PC-3 (cell line): ENCODE measurements at regions of chr3 and their contacts with region 1.

Region 1: GRCh38 chr3:31166249-31166885 is 271.9 kb upstream of the GADL1 start:
- DNase-seq: peak; percentile 92
- ATAC-seq: peak; percentile 90
- H3K4me3 ChIP-seq: peak overlapping the region; percentile 19; the same call in 1 of the 2 replicates
- H3K27ac ChIP-seq: peak overlapping the region; percentile 52
- H3K4me1 ChIP-seq: peaks cover 28% of the 10 kb centered on the region
- H3K27me3 ChIP-seq: no peaks in the 10 kb centered on the region
- CTCF ChIP-seq: no peak

Region 2: DNA sequence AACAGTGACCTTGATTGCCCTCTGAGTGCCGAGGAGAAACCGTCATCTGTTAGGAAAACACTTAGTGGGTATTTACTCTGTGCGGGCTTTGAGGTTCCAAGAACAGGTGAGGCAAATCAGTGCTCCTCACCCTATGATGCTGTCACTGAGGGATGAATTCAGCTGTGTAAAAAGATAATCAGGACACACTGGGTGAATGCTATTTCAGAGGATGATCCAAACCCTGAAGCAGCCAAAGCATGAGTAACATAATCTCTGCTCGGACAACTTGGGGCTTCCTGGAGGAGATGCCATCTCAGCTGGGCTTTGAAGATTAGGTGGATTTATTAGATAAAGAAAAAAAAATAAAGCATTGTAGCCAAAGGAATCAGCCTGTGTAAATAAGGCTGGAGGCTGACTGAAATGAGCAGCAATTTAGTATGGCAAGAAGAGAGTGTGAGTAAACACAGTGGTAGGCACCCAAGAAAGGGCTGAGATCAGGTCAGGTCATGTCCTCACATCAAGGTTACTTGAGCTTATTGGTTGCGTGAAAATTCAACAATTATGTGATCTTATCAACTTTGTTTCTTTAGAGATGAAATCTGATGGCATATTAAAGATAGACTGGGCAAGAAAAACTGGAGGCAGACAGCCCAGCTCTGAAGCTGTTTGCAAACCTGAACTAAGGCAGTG is 261.2 kb before region 1 on chr3:
- CTCF ChIA-PET with region 1: no interaction called
- POLR2A ChIA-PET with region 1: no interaction called
- intact Hi-C with region 1: no loop called
- DNase-seq: no peak
- ATAC-seq: no peak
- H3K4me3 ChIP-seq: no peak overlapping the region
- H3K27ac ChIP-seq: no peak overlapping the region
- H3K4me1 ChIP-seq: no peaks in the 10 kb centered on the region
- H3K27me3 ChIP-seq: no peaks in the 10 kb centered on the region
- CTCF ChIP-seq: no peak

Region 3: DNA sequence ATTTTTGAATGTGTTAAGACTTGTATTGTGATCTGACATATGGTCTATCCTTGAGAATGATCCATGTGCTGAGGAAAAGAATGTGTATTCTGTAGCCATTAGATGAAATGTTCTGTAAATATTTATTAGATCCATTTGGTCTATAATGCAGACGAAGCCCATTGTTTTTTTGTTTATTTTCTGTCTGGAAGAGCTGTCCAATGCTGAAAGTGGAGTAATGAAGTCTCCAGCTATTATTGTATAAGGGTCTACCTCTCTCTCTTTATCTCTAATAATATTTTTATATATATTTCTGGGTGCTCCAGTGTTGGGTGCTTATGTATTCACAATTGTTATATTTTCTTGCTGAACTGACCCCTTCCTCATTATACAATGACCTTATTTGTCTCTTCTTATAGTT is 21.3 kb before region 1 on chr3:
- CTCF ChIA-PET with region 1: no interaction called
- POLR2A ChIA-PET with region 1: no interaction called
- intact Hi-C with region 1: no loop called
- DNase-seq: no peak
- ATAC-seq: no peak
- H3K4me3 ChIP-seq: no peak overlapping the region
- H3K27ac ChIP-seq: no peak overlapping the region
- H3K4me1 ChIP-seq: peaks cover 14% of the 10 kb centered on the region
- H3K27me3 ChIP-seq: no peaks in the 10 kb centered on the region
- CTCF ChIP-seq: no peak

Region 4: DNA sequence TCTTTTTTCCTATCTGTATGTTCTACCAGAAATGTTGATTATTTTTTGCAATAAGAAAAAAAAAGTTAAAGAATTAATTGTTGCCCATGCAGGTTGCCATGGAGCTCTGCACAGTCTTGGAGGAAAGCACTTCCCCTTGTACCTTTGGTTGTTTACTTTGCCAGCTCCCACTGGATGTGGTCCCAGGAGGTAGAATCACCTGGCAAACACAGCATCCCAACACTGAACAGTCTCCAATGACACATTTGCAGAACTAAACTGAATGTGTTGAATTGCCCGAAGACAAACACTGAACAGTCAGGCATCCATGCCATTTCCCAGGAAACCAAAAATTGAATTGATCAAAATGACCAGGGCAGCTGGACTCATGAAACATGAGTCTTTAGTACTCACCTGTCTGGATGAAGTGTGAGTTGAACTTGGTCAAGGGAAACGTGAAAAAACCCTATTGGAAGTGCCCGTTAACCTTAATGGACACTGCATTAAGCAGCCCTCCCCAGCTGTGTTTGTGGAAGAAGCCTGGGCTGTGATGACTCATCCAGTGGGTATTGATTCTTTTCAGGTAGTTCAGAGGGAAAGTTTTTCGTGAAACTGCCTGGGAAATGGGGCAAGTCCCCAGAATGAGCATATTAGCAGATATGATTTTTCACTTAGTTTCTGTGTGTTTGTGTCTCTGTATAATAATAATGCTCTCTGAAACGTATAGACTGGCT is 81.6 kb after region 1 on chr3:
- CTCF ChIA-PET with region 1: no interaction called
- POLR2A ChIA-PET with region 1: no interaction called
- intact Hi-C with region 1: no loop called
- DNase-seq: peak; percentile 82
- ATAC-seq: peak; percentile 85
- H3K4me3 ChIP-seq: no peak overlapping the region
- H3K27ac ChIP-seq: peak overlapping the region; percentile 51
- H3K4me1 ChIP-seq: peaks cover 29% of the 10 kb centered on the region
- H3K27me3 ChIP-seq: no peaks in the 10 kb centered on the region
- CTCF ChIP-seq: no peak

Region 5: GRCh38 chr3:31288641-31289100 is 122.3 kb after region 1 on chr3:
- CTCF ChIA-PET with region 1: no interaction called
- POLR2A ChIA-PET with region 1: no interaction called
- intact Hi-C with region 1: loop called (anchors 2 kb)
- DNase-seq: peak; percentile 96
- ATAC-seq: peak; percentile 91
- H3K4me3 ChIP-seq: no peak overlapping the region
- H3K27ac ChIP-seq: peak overlapping the region; percentile 71
- H3K4me1 ChIP-seq: peaks cover 57% of the 10 kb centered on the region
- H3K27me3 ChIP-seq: no peaks in the 10 kb centered on the region
- CTCF ChIP-seq: no peak

Region 6: DNA sequence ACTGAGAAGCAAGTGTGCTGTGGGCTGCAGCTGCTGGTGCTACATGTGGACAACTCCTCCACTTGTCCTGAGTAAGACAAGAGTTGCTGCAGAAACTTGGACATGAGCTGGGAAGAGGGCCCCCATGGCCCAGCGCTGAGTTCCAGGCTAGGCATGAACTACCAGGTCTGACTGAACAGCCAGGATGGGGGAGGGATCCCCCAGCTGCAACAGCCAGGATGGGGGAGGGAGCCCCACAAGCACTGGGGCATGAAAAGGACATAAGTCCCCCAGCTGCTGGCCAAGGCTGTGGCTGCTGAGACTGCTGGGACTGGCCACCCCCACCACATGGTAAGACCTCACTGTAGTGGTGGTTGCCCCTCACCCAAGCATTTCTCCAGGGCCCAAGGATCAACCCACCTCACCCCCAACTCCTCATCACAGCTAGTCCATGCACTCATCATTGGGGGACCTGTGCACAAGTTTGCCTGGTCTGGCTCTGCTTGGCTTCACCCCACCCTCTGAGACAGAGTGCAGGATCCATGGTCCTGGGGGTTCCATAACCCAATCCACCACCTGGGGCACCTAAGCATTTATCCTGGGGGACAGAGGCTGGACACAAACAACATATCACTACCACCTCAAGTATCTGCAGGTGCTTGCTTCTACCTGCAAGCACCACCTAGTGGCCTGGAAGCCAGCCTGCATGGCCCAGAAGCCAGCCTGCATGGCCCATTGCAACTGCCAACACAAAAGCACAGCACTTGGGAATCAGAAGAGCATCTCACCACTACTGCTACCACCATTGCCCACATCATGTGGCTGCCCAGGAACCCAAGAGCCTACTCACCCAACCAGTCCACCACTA is 281.9 kb after region 1 on chr3:
- CTCF ChIA-PET with region 1: no interaction called
- POLR2A ChIA-PET with region 1: no interaction called
- intact Hi-C with region 1: loop called (anchors 10 kb)
- DNase-seq: peak; percentile 59
- ATAC-seq: peak; percentile 97
- H3K4me3 ChIP-seq: no peak overlapping the region
- H3K27ac ChIP-seq: no peak overlapping the region
- H3K4me1 ChIP-seq: peaks cover 27% of the 10 kb centered on the region
- H3K27me3 ChIP-seq: no peaks in the 10 kb centered on the region
- CTCF ChIP-seq: peak; percentile 87